BJ (cell line): ENCODE measurements at regions of chr10 and their contacts with region 1.

Region 1: DNA sequence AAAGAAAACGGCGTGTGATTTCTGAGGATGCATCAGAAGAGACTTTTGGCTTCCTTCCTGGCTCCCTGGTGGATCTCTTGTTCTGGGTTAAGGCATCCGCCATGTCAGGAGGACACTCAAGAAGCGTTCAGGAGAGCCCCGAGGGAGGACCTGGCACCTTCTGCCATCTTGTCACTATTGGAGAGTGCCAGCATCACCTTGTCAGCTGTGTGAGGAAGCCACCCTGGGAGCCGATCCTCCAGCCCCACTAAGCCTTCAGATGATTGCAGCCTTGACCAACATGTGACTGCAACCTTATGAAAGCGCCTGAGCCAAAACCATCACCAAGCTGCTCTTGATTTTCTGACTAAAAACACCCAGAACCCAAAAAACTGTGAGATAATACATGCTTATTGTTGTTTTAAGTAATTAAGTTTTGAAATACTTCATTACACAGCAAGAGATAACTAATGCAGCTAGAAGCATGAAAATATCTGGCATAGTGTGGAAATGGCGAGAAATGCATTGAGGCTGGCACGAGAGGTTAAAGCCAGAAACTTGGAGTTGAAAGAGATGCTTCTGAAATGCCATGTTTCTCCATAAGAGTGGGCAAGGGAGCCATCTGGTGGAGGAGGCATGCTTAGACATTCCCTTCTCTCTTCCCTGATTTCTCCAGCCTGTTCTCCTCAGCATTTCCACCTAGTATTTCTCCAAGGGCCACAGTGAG is 5.4 kb upstream of the ZFYVE27 start:
- DNase-seq: no peak
- H3K4me3 ChIP-seq: no peak overlapping the region
- H3K27me3 ChIP-seq: no peaks in the 10 kb centered on the region
- CTCF ChIP-seq: peak; percentile 82

Region 2: GRCh38 chr10:97584060-97584797 is 147.3 kb before region 1 on chr10 and contains the start of gene HOGA1:
- CTCF ChIA-PET with region 1: no interaction called
- POLR2A ChIA-PET with region 1: no interaction called
- DNase-seq: no peak
- H3K4me3 ChIP-seq: no peak within 1 kb of the TSS
- H3K27me3 ChIP-seq: no peaks in the 10 kb centered on the region
- CTCF ChIP-seq: no peak
- polyA plus RNA-seq, gene HOGA1: 0.17 and 0.23 TPM in 2 replicates

Region 3: DNA sequence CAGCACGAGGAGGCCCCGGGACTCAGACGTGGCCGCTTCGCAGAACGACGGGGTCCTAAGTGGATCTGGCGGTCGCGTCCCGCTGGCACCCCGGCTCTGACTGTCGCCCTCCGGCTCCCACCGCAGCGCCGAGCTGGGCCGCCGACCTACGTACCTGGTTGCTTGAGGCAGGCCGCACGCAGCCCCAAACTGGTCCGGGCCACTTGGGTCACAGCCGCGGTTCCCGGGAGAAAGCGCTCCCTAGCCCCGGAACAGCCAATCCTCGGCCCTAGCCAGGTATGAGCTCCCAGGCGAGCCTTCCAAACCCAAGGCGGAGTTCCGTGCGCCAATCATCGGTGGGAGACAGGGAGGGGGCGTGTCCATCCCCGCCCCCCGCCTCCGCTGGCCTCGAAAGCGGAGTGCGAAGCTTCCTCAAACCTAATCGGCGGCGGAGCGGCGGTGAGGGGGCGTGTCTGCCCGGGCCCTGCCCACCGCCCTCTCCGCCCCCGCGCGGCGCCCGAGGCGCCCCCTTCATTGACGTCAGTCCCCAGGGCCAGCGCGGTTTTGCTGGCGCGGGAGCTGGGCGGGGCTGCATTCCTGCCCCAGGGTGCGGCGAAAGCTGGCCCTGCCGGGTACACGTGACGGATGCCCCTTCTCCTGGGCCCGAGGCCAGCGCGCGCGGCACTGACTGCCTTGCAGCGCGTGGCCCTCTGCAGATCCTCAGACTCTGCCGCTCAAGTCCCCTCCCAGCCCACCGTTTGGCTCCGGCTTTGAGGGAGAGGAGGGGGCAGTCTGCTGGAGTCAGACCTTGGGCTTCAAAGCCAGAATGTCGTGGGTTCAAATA is 44.3 kb before region 1 on chr10 and contains the start of gene AVPI1:
- CTCF ChIA-PET with region 1: interaction called, 17 read pairs
- POLR2A ChIA-PET with region 1: interaction called, 9 read pairs
- DNase-seq: peak; percentile 92
- H3K4me3 ChIP-seq: peak within 1 kb of the TSS; percentile 76
- H3K27me3 ChIP-seq: no peaks in the 10 kb centered on the region
- CTCF ChIP-seq: no peak
- polyA plus RNA-seq, gene AVPI1: 32.4 and 32.7 TPM in 2 replicates

Region 4: DNA sequence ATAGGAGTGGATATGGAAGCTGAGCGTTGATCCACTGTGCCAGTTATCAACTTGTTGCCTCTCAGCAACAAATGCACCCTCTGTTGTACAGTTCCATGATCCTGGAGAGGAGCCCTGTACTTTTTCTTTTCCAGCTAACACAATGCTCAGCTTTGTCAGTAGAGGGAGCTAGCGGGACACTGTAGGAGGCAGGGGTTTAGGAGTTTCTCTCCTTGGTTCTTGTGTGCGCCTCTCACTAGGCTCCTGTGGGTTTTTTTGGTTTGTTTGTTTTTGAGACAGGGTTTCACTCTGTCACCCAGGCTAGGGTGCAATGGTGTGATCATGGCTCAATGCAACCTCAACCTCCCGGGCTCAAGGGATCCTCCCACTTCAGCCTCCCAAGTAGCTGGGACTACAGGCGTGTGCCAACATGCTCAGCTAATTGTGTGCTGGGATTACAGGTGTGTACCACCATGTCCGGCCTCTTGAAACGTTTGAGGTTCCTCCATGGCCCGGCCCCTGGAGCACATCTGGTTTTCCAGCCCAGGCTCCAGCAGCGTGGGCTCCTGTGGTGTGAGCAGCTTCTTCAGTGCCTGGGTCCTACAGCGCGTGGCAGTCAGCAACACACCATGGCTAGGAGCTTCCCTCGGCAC is 29.9 kb before region 1 on chr10:
- CTCF ChIA-PET with region 1: interaction called, 517 read pairs
- POLR2A ChIA-PET with region 1: no interaction called
- DNase-seq: no peak
- H3K4me3 ChIP-seq: no peak overlapping the region
- H3K27me3 ChIP-seq: no peaks in the 10 kb centered on the region; the same call in 1 of the 2 replicates
- CTCF ChIP-seq: peak; percentile 92

Region 5: DNA sequence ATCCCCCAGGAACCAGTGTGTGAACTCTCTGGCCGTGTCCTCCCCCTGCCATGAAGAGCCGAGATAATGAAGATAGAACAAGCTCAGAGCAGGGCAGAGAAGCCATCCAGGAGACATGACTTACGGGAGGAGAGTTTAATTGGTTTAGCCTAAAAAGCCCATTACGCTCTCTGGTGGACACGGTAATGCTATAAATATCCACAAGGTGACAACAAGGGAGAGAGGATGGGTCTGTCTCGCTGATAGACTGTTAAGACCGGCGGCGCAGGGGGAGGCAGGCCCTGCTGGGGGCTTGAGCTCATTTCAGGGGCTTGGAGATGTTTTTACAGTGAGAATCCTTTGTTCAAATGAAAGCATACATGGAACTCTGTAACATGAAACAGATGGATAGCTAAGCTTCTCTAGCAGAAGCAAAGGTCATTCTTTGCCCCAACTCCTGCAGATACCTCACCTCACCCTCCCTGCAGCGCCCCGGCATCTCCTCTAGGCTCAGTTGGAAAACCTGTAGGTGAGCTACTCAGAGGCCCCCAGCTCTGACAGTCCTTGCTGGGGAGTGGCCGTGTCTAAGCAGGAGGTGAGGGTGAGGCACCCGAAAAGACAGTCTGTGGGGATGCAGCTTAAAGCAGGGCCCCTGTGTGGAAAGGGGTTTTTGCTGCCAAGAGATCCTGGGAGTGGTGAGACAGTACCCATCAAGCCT is 577.3 kb after region 1 on chr10:
- CTCF ChIA-PET with region 1: no interaction called
- POLR2A ChIA-PET with region 1: no interaction called
- DNase-seq: no peak
- H3K4me3 ChIP-seq: no peak overlapping the region
- H3K27me3 ChIP-seq: peaks cover 4% of the 10 kb centered on the region; the same call in 1 of the 2 replicates
- CTCF ChIP-seq: no peak